Dorsolateral prefrontal cortex (tissue), 120 donors: ENCODE measurements at regions of chr6 and their contacts with region 1.

Region 1: GRCh38 chr6:85678602-85679444 is 36.1 kb upstream of the SYNCRIP start:
- DNase-seq: peak; percentile 91 to 99 (median 98)
- H3K4me3 ChIP-seq: peak overlapping the region; percentile 69 to 99 (median 90)
- H3K27ac ChIP-seq: peak overlapping the region; percentile 2 to 97 (median 89)
- H3K27me3 ChIP-seq: no peaks in the 10 kb centered on the region
- CTCF ChIP-seq: peak in 35 of 56 donors; percentile 7 to 60 (median 26)

Region 2: DNA sequence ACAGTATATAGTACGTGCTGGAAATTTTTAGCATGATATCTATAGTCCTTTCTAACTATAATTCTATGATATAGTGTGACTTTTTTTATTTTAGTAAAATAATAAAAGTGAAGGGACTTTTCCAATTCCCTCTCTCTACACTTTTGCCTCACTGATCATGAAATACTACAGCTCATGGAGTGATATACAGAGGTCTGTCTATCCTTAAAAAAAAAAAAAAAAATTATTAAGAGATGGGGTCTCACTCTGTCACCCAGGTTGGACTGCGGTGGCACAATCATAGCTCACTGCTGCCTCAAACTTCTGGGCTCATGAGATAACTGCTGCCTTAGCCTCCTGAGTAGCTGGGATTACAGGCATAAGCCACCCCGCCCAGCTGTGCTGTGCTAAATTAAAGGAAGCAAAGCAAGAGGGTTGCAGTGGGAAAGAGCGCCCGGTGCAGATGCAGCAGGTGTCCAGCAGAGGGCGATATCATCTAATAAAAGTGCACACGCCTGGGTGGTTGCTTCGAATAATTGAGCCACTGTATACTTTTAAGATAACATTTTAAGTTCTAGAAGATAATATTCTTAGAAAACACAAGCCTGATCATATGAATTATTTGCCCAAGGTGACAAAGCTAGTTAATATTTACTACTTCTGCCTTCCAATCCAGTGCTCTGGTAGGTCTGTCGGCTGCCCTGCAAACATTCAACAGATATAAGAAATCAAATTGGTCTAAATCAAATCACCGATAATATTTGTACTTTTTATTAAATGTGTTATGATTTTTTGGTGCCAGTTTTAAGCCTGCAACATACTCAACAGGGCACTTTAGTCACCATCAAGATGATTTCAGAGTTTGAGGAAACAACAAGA is 323.8 kb before region 1 on chr6:
- intact Hi-C with region 1: loop called in 1 of 2 experiments (anchors 5 kb)
- DNase-seq: peak; percentile 28 to 79 (median 63)
- H3K4me3 ChIP-seq: no peak overlapping the region
- H3K27ac ChIP-seq: no peak overlapping the region
- H3K27me3 ChIP-seq: peaks cover 0 to 7% (median 0%) of the 10 kb centered on the region in 45 donors
- CTCF ChIP-seq: peak; percentile 60 to 99 (median 94)

Region 3: DNA sequence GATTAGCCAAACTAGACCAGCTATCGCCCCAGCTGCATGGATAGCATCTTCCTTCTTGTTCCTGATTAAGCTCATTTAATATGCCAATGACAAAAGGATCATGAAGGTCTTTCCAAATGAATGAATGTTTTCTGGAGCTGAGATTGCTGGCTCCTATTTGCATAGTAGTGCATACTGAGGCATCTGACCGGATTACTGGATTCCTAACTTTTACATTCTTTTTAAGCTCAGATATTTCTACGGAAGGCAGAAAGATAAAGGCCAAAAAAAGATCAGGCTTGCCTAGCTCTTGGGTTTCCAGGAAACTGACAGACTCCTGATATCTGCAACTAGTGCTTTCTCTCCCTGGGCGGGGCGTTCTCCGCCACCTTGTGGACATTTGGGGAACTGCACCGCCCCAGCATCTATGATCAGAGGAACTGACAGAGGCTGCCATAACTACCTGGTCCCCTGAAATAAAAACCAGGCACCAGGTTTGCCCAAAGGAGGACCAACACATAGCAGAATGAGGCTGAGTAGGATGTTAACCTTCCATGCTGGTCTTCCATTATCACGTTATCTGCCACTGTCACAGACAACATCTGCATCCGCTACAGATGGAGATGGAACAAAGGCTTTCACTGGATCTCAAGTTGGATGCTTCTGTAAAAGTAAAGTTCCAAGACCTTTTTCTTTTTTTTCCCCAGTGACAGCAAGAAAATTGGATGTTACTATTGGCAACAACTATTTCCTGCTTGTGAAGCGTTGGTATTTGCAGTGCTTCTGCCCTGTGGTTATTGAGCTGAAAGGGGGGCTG is 195.7 kb before region 1 on chr6:
- intact Hi-C with region 1: loop called in 1 of 2 experiments (anchors 5 kb)
- DNase-seq: peak; percentile 27 to 86 (median 78)
- H3K4me3 ChIP-seq: peak overlapping the region in 2 of 59 donors; percentile 7 to 10
- H3K27ac ChIP-seq: no peak overlapping the region
- H3K27me3 ChIP-seq: peaks cover 0 to 4% (median 0%) of the 10 kb centered on the region in 45 donors
- CTCF ChIP-seq: peak; percentile 95 to 100 (median 99)

Region 4: GRCh38 chr6:85593438-85594196 is 85.2 kb before region 1 on chr6 and contains the start of gene SNX14:
- intact Hi-C with region 1: loop called (anchors 1 to 5 kb)
- DNase-seq: peak; percentile 81 to 94 (median 92)
- H3K4me3 ChIP-seq: peak within 1 kb of the TSS; percentile 67 to 98 (median 86)
- H3K27ac ChIP-seq: peak within 1 kb of the TSS; percentile 75 to 98 (median 93)
- H3K27me3 ChIP-seq: no peaks in the 10 kb centered on the region
- CTCF ChIP-seq: peak in 21 of 56 donors; percentile 4 to 47 (median 23)
- total RNA-seq, gene SNX14: 64.2 to 128 (median 96.7) TPM

Region 5: DNA sequence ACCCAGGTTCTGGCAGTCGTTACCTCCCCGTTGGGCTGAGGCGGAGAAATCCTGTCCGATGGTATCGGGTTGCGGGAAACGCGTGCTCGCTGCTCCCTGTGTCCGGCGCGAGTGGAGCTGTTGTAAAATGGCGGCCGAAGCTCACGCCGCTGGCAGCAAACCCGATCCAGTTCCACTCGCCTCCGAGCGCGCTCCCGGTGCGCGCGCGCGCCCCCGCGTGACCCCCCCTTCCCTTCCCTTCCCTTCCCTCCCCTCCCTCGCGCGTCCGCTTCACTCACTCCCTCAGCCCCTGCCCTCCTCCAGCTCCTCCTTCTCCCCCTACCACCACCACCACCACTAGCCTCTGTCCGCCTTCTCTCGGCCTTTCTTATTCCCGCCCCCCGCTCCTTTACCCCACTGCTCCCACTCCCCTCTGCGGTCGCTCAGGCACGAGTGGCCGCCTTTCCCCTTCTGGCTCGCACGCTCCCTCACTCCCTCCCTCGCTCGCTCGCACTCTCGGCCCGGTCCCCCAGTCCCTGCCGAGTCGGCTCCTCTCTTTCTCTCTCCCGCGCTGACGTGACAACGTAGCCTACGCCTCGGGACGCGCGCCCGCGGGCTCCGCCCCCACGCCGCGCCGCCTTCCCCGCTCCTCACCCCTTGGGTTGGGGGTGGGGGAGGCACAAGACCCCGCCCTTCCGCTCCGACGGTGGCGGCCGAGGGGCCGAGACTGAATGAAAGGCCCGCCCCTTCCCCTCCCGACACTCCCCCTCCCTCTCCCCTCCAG is 35.9 kb before region 1 on chr6 and contains the start of gene SYNCRIP:
- intact Hi-C with region 1: loop called (anchors 1 kb)
- DNase-seq: peak; percentile 94 to 99 (median 98)
- H3K4me3 ChIP-seq: peak within 1 kb of the TSS; percentile 72 to 100 (median 96)
- H3K27ac ChIP-seq: peak within 1 kb of the TSS; percentile 87 to 99 (median 98)
- H3K27me3 ChIP-seq: no peaks in the 10 kb centered on the region
- CTCF ChIP-seq: peak in 2 of 56 donors; percentile 6 to 18
- total RNA-seq, gene SYNCRIP: 36.9 to 66.3 (median 53.8) TPM